ENCODE measurements at regions of chr17 and their contacts with region 1.

Region 1: DNA sequence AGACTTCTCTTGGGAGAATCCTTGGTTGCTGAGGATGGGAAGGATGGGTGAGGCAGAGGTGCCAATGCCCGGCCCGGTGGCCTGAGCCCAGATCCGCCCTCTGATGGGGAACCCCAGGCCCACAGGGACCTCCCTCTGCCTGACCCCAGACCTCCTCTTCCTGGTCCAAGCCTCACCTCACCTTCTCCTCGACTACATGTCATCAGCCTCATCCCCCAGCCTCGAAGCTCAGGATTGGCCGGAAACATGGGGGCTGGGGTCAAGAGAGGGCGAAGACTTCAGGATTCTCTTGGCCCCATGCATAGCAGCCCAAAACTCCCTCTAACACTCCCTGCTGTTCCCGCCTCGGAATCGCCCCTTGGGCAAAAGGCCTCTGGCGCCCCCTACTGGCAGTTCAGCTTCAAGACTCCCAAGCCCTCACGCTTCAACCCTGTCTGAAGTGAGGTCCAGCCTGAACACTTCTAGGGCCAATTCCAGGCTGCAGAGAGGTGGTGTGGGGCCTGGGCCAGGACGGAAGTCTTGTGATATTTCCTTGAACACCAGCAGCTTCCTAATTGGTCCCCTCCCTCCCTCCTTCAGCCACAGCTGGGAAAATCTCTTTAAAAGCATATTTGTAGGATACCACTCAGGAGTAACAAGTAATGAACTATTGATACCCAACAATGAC is 47.2 kb downstream of the ARHGAP27 start:
- H3K4me3 ChIP-seq: no peak overlapping the region
- H3K27ac ChIP-seq: no peak overlapping the region
- H3K4me1 ChIP-seq: no peaks in the 10 kb centered on the region
- CTCF ChIP-seq: peak; percentile 92

Region 2: DNA sequence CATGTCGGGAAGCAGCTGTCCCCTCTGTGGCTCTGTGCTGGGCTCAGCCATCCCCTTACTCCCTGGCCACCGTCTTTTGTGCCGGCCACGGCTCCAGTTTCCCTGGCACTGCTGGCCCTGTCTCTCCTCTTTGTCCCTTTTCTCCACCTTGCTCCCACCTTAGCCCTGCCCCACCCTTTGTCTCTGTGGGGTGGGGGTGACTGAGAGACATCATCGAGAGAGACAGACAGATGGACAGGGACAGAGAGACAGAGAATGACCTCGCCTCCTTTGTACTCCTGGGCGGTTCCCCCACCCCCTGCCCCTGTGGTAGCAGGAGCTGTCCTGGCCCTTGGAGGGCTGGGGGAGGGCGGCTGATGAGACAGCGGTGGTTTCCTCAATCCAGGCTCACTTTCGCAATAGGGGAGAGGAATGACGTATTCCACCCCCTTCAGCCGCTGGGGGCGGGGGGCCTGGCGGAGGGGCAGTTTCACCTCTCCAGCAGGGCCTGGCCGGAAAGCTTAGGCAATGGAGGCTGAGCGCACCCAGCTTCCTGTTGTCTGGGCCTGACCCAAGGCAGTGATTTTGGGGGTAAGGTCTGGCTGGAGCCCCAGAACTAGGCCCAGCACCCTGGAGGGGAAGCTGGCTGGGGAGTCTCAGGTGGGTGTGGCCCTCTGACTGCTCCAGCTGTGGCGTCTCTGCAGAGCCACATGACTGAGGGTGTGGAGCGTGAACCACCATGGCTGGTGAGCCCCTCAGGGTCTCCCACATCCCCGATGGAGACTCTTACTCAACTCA is 156.5 kb before region 1 on chr17:
- CTCF ChIA-PET with region 1: interaction called, 27 read pairs
- POLR2A ChIA-PET with region 1: no interaction called
- H3K4me3 ChIP-seq: no peak overlapping the region
- H3K27ac ChIP-seq: no peak overlapping the region
- H3K4me1 ChIP-seq: no peaks in the 10 kb centered on the region; the same call in 1 of the 2 replicates
- CTCF ChIP-seq: no peak

Region 3: GRCh38 chr17:45247429-45248131 is 137.9 kb before region 1 on chr17:
- CTCF ChIA-PET with region 1: interaction called, 11 read pairs
- POLR2A ChIA-PET with region 1: no interaction called
- H3K4me3 ChIP-seq: peak overlapping the region; percentile 67
- H3K27ac ChIP-seq: peak overlapping the region; percentile 80
- H3K4me1 ChIP-seq: peaks cover 2% of the 10 kb centered on the region
- CTCF ChIP-seq: no peak; the same call in 1 of the 2 replicates

Region 4: GRCh38 chr17:45277216-45277849 is 108.1 kb before region 1 on chr17:
- CTCF ChIA-PET with region 1: interaction called, 357 read pairs
- POLR2A ChIA-PET with region 1: interaction called, 6 read pairs
- H3K4me3 ChIP-seq: no peak overlapping the region
- H3K27ac ChIP-seq: no peak overlapping the region
- H3K4me1 ChIP-seq: peaks cover 5% of the 10 kb centered on the region
- CTCF ChIP-seq: peak; percentile 55

Region 5: GRCh38 chr17:45307290-45308015 is 78.0 kb before region 1 on chr17:
- CTCF ChIA-PET with region 1: interaction called, 27 read pairs
- POLR2A ChIA-PET with region 1: no interaction called
- H3K4me3 ChIP-seq: no peak overlapping the region
- H3K27ac ChIP-seq: peak overlapping the region; percentile 35; the same call in 1 of the 2 replicates
- H3K4me1 ChIP-seq: peaks cover 31% of the 10 kb centered on the region
- CTCF ChIP-seq: no peak

Region 6: GRCh38 chr17:45341533-45342158 is 43.8 kb before region 1 on chr17:
- CTCF ChIA-PET with region 1: interaction called, 10 read pairs
- POLR2A ChIA-PET with region 1: interaction called, 4 read pairs
- H3K4me3 ChIP-seq: no peak overlapping the region
- H3K27ac ChIP-seq: peak overlapping the region; percentile 53; the same call in 1 of the 2 replicates
- H3K4me1 ChIP-seq: peaks cover 26% of the 10 kb centered on the region
- CTCF ChIP-seq: no peak

Region 7: GRCh38 chr17:45371414-45372327 is 13.8 kb before region 1 on chr17:
- CTCF ChIA-PET with region 1: interaction called, 25 read pairs
- POLR2A ChIA-PET with region 1: interaction called, 6 read pairs
- H3K4me3 ChIP-seq: peak overlapping the region; percentile 21
- H3K27ac ChIP-seq: peak overlapping the region; percentile 55
- H3K4me1 ChIP-seq: 0 out of 2 replicates have a peak, but pooled peaks cover 7% of the 10 kb centered on the region
- CTCF ChIP-seq: peak; percentile 58; the same call in 1 of the 2 replicates

Region 8: GRCh38 chr17:45719335-45720071 is 334.0 kb after region 1 on chr17:
- CTCF ChIA-PET with region 1: no interaction called
- POLR2A ChIA-PET with region 1: no interaction called
- H3K4me3 ChIP-seq: no peak overlapping the region
- H3K27ac ChIP-seq: no peak overlapping the region
- H3K4me1 ChIP-seq: peaks cover 2% of the 10 kb centered on the region; the same call in 1 of the 2 replicates
- CTCF ChIP-seq: peak; percentile 43; the same call in 1 of the 2 replicates

Measured in HEK293 (cell line).